Activated naive CD4-positive, alpha-beta T cell treated with anti-CD3 and anti-CD28 coated beads for 36 hours (primary cell): ENCODE measurements at regions of chr12 and their contacts with region 1.

Region 1: DNA sequence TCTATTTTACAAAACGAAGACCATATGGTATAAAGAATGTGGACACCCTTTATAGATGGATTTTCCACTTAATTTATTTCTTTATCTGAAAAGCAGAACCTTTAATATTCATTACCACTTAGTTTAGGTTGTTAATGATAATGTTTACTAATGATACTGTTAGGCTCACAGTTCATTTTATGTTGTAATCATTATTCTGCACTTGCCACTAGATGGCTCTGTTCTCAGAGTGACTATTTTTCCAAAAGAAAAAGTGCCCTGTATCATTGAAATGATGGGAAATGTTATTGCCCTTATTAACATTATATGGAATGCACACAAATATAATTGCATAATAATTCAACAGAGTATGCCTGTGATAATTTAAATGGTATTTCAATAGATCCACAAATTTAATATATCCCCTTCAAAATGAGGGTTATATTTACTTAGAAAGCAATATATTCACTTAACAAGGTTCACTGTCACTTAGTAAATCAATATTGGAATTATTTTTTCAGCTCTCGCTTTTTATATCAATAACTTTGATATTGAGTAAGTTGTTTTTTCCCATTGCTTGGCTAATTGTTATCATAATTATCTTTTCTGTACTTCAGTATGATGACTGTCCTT is 95.7 kb downstream of the PDE3A start:
- DNase-seq: no peak
- H3K4me3 Mint-ChIP-seq: no peak overlapping the region
- H3K27ac Mint-ChIP-seq: no peak overlapping the region
- H3K4me1 Mint-ChIP-seq: no peaks in the 10 kb centered on the region
- H3K27me3 Mint-ChIP-seq: no peaks in the 10 kb centered on the region

Region 2: GRCh38 chr12:19967486-19967885 is 496.5 kb before region 1 on chr12:
- CTCF ChIA-PET with region 1: no interaction called
- intact Hi-C with region 1: no loop called
- DNase-seq: no peak
- H3K4me3 Mint-ChIP-seq: no peak overlapping the region
- H3K27ac Mint-ChIP-seq: no peak overlapping the region
- H3K4me1 Mint-ChIP-seq: no peaks in the 10 kb centered on the region
- H3K27me3 Mint-ChIP-seq: no peaks in the 10 kb centered on the region

Region 3: GRCh38 chr12:20601668-20602280 is 137.8 kb after region 1 on chr12:
- CTCF ChIA-PET with region 1: no interaction called
- intact Hi-C with region 1: loop called (anchors 10 kb)
- DNase-seq: no peak
- H3K4me3 Mint-ChIP-seq: no peak overlapping the region
- H3K27ac Mint-ChIP-seq: no peak overlapping the region
- H3K4me1 Mint-ChIP-seq: no peaks in the 10 kb centered on the region
- H3K27me3 Mint-ChIP-seq: no peaks in the 10 kb centered on the region

Region 4: DNA sequence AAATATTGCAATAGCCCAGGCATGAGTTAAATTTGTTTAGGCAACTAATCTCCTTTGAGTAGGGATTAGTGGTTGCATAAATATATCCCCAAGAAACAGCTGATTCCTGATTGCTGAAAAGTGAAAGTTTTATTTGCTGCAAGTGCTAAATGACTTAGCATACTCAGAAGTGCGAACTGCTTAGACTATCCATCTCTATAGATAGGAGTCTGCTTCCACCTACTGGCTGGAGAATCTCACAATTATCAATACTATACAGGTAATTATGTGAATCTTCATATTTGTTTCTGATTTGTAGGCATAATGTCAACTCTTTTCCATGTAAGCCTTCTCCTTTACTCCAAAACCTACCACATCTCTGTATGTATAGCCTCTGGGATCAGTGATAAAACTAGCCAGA is 334.5 kb after region 1 on chr12:
- CTCF ChIA-PET with region 1: no interaction called
- intact Hi-C with region 1: loop called (anchors 5 kb)
- DNase-seq: no peak
- H3K4me3 Mint-ChIP-seq: no peak overlapping the region
- H3K27ac Mint-ChIP-seq: no peak overlapping the region
- H3K4me1 Mint-ChIP-seq: no peaks in the 10 kb centered on the region
- H3K27me3 Mint-ChIP-seq: no peaks in the 10 kb centered on the region